Dendritic cell treated with granulocyte-macrophage colony-stimulating factor and Interleukin-4, amounts not matched to agents 40 ng/mL and 50 ng/mL, for 4 days (primary cell): ENCODE measurements at regions of chr1 and their contacts with region 1.

Region 1: DNA sequence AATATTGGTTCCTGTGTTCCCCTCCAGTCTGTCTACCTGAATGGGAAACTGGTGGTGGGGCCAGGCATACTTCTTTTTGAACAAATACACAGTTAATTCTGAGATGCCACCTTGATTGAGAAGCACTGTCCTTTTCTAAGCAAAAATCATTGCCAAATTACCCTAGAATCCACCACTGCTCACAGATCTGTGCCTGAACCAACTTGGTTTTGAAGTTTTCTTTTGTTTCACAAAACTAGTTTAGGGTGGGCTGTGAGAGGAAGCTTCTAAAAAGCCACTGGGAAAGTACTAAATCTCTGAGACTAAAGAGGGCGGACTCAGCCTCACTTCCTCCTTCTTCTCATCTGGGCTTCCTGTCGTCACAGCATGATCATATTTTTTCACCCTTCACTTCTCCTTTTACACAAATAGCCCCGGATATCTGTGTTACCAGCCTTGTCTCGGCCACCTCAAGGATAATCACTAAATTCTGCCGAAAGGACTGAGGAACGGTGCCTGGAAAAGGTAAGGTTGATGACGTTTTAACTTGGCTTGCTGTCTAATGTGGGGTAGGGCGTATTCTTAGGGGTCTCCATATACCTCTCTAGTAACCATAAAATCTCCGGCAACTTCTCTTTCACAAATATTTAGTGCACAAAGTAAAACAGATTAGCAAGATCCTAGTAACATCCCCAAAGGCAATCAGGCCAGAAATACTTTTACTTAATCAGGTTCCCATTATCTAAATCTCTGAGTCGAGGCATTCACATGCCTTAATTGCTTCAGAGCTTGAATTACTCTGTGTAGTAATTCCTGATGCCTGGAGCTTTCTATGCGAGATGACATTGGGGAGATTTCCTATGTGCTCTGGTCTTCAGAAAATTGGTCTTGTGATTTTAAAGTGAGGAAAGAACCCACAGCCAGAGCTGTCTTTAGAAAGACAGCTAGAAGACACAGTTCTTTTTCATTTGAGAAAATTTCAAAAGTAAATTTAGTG is at the start of gene CD53:
- H3K4me3 Mint-ChIP-seq: peak within 1 kb of the TSS; percentile 94
- H3K27ac Mint-ChIP-seq: peak within 1 kb of the TSS; percentile 94
- H3K4me1 Mint-ChIP-seq: peaks cover 52% of the 10 kb centered on the region
- H3K27me3 Mint-ChIP-seq: no peaks in the 10 kb centered on the region

Region 2: GRCh38 chr1:110639724-110640386 is 233.2 kb before region 1 on chr1:
- intact Hi-C with region 1: loop called (anchors 5 kb)
- H3K4me3 Mint-ChIP-seq: peak overlapping the region; percentile 27
- H3K27ac Mint-ChIP-seq: peak overlapping the region; percentile 91
- H3K4me1 Mint-ChIP-seq: peaks cover 83% of the 10 kb centered on the region
- H3K27me3 Mint-ChIP-seq: no peaks in the 10 kb centered on the region

Region 3: DNA sequence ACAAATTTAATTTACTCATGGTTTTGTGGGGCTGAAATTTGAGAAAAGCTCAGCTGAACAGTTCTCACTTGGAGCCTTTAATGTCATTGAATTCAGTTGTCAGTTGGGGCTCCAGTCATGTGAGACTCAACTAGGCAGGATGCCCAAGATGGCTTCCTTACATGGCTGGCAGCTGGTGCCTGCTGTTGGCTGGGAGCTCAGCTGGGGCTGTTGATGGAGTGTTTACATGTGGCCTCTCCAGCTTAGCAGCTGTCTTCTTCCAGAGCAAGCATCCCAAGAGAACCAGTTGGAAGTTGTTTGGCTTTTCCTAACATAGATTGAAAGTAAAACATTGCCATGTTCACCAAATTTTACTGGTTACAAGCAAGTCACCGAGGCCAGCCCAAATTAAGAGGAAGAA is 116.5 kb before region 1 on chr1:
- intact Hi-C with region 1: no loop called
- H3K4me3 Mint-ChIP-seq: no peak overlapping the region
- H3K27ac Mint-ChIP-seq: no peak overlapping the region
- H3K4me1 Mint-ChIP-seq: no peaks in the 10 kb centered on the region
- H3K27me3 Mint-ChIP-seq: peaks cover 56% of the 10 kb centered on the region